H1 (cell line): ENCODE measurements at regions of chr10 and their contacts with region 1.

Region 1: DNA sequence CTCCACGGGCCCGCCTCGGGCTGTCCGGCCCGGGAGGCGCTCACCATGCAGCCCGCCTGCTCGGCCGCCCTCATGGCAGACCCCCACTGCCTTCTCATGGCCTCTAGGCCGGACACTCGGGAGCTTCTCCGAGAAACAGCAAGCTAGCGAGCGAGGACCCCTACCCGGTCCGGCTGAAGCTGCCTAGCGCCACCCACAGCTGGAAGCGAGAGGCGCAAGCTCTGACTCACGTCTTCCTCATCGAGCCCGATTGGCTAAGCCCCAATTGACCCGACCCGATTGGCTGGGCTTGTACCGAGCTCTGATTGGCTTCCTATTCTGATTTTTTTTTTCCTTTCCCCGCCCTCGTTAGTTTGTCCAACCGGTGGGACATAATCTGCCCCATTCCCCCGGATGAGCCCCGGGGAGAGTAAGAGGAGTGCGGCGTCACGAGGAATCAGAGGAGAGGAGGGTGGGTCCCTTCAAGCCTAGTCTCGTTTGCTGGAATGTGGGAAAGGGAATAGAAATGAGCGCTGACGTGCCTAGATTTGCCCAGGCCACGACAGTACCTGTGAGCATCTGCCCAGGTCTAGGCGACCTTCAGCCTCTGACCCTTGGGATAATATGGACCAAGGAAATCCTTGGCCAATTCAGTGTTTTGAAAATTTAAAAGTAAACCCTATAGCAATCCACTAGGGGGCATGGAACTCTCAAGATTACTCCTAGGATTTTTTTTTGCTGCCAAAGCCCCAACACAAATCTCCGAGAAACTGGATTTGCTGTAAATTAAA is at the start of gene TYSND1:
- DNase-seq: peak; percentile 96 to 97
- H3K4me3 ChIP-seq: peak within 1 kb of the TSS; percentile 51 to 70 (median 59)
- H3K27ac ChIP-seq: peak within 1 kb of the TSS; percentile 67
- H3K4me1 ChIP-seq: peaks cover 3 to 9% (median 6%) of the 10 kb centered on the region in 4 experiments; a peak in 3 of 7 replicates
- H3K27me3 ChIP-seq: peaks cover 0 to 8% (median 4%) of the 10 kb centered on the region in 4 experiments; a peak in 3 of 7 replicates
- CTCF ChIP-seq: peak; percentile 77 to 82 (median 81)
- EP300 ChIP-seq: no peak
- POLR2A ChIP-seq: peak; percentile 64 to 87
- RAD21 ChIP-seq: peak; percentile 58 to 70
- total RNA-seq, gene TYSND1: 14.1 and 15.0 TPM in 2 replicates

Region 2: DNA sequence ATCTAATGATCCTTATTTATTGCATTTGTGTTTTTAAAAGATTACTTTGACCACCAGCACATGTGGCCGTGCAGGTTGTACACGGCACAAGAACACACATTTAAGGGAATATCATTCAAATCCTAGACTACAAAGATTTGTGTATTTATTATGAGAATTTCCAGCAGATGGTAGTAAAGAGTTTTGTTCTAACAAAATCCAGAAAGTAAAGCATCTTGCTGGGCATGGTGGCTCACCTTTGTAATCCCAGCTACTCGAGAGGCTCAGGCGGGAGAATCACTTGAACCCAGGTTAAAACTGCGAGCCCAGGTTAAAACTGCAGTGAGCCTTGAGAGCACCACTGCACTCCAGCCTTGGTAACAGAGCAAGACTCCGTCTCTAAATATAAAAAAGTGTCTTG is 62.5 kb before region 1 on chr10:
- CTCF ChIA-PET with region 1: no interaction called
- POLR2A ChIA-PET with region 1: no interaction called
- DNase-seq: no peak
- H3K4me3 ChIP-seq: no peak overlapping the region
- H3K27ac ChIP-seq: no peak overlapping the region
- H3K4me1 ChIP-seq: no peaks in the 10 kb centered on the region; a peak in 2 of 7 replicates
- H3K27me3 ChIP-seq: no peaks in the 10 kb centered on the region
- CTCF ChIP-seq: no peak
- EP300 ChIP-seq: no peak
- POLR2A ChIP-seq: no peak
- RAD21 ChIP-seq: no peak

Region 3: DNA sequence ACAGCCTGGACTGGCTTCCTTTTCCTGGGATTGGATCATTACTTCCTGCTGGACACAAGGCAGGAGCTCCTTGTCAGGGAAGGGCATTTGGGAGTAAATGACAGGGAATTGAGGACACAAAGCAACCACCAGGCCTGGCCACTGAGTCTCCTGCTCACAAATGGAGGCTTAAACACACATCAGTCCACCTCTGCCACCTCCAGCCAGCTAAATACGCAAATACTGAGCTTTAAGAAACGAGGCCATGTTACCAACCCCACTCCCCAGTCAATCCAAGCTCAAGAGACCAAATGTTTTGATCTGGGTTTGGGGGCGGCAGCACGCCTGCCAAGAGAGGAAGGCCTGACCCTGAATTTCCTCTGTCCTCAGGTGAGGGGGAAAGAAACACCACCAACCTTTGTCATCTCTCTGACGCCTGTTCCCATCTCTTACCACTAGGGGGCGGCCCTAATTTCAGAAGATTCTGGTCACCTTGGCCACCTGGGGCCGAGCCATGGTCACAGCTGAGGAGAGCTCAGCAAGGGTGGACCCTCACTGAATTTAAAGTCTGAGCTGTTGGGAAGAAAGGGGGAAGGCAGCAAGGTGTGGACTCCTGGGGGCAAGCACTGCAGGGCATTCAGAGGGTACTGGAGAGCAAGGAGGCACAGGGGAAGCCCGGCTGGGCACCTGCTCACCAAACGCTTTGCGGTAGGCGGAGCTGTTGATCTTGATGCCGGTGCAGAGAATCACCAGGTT is 30.6 kb before region 1 on chr10:
- CTCF ChIA-PET with region 1: interaction called, 123 read pairs
- POLR2A ChIA-PET with region 1: interaction called, 15 read pairs
- DNase-seq: peak in 1 of 2 experiments; percentile 84
- H3K4me3 ChIP-seq: no peak overlapping the region
- H3K27ac ChIP-seq: no peak overlapping the region
- H3K4me1 ChIP-seq: no peaks in the 10 kb centered on the region; a peak in 1 of 7 replicates
- H3K27me3 ChIP-seq: no peaks in the 10 kb centered on the region
- CTCF ChIP-seq: peak; percentile 69 to 90 (median 88)
- EP300 ChIP-seq: no peak
- POLR2A ChIP-seq: no peak
- RAD21 ChIP-seq: peak; percentile 50 to 64

Region 4: DNA sequence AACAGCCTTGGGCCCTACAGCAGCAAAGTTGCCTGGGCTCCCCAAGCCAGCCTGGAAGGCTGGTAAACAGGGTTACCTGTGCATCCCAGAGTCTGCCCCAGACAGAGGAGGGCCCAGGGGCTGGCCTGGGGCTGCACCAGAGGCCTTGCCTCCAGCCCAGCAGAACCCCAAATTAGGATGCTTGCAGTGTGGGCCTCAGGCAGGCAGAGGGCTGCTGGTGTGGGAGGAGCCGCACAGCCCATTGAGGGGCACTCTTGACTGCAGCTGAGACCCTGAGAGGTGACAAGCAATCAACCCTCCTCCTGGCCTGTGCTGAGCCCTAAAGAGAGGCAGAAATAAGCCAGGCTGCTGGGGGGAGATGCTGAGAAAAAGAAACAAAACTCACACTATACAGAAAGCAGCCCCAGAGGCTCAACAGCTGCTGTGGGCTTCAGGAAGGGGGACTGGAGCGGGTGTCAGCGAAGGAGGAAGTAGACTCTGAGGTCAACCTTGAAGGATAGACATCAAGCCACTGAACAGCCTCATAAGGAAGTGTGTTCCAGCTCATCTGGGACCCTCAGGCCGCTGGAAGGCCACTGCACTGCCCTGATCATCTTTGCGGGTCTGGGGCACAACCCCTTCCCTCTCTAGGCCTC is 20.6 kb before region 1 on chr10:
- CTCF ChIA-PET with region 1: interaction called, 17 read pairs
- POLR2A ChIA-PET with region 1: interaction called, 11 read pairs
- DNase-seq: no peak
- H3K4me3 ChIP-seq: no peak overlapping the region
- H3K27ac ChIP-seq: no peak overlapping the region
- H3K4me1 ChIP-seq: no peaks in the 10 kb centered on the region
- H3K27me3 ChIP-seq: peaks cover 0 to under 1% (median under 1%) of the 10 kb centered on the region in 4 experiments; a peak in 2 of 7 replicates
- CTCF ChIP-seq: peak in 1 of 3 experiments; percentile 12; a peak in 1 of 4 replicates
- EP300 ChIP-seq: no peak
- POLR2A ChIP-seq: no peak
- RAD21 ChIP-seq: no peak

Region 5: GRCh38 chr10:70132098-70133029 is 14.3 kb before region 1 on chr10 and contains the start of gene AIFM2:
- CTCF ChIA-PET with region 1: interaction called, 10 read pairs
- POLR2A ChIA-PET with region 1: interaction called, 31 read pairs
- DNase-seq: peak in 1 of 2 experiments; percentile 85
- H3K4me3 ChIP-seq: peak within 1 kb of the TSS; percentile 63 to 71 (median 66)
- H3K27ac ChIP-seq: no peak within 1 kb of the TSS
- H3K4me1 ChIP-seq: peaks cover 0 to 4% (median 1%) of the 10 kb centered on the region in 4 experiments; a peak in 2 of 7 replicates
- H3K27me3 ChIP-seq: peaks cover 0 to 25% (median 19%) of the 10 kb centered on the region in 4 experiments; a peak in 6 of 7 replicates
- CTCF ChIP-seq: peak in 1 of 3 experiments; percentile 9; a peak in 1 of 4 replicates
- EP300 ChIP-seq: peak in 1 of 2 experiments; percentile 62; a peak in 1 of 3 replicates
- POLR2A ChIP-seq: peak in 1 of 2 experiments; percentile 23; a peak in 1 of 3 replicates
- RAD21 ChIP-seq: no peak
- total RNA-seq, gene AIFM2: 3.0 and 4.0 TPM in 2 replicates

Region 6: DNA sequence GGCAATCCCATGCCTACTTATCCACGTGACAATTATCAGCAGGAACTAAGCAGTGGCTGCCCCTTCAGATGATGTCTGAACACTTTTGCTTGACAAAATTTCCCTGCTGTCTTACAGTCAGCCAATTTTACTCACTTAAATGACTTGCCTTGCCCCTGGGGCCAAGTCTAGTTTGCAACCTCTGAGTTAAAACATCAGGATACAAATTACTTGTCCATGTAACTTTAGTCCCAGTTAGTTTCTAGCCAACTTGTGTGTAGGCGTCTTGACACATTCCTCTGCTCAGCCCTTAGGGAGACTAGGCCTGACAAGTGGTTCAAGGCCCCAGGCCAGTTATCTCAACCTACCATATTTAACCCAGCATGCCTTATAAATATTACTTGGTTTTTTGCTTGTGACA is 11.4 kb after region 1 on chr10:
- CTCF ChIA-PET with region 1: interaction called, 25 read pairs
- POLR2A ChIA-PET with region 1: interaction called, 6 read pairs
- DNase-seq: no peak
- H3K4me3 ChIP-seq: no peak overlapping the region
- H3K27ac ChIP-seq: no peak overlapping the region
- H3K4me1 ChIP-seq: peaks cover 0 to 2% (median under 1%) of the 10 kb centered on the region in 4 experiments; a peak in 1 of 7 replicates
- H3K27me3 ChIP-seq: no peaks in the 10 kb centered on the region
- CTCF ChIP-seq: no peak
- EP300 ChIP-seq: no peak
- POLR2A ChIP-seq: no peak
- RAD21 ChIP-seq: no peak

Region 7: DNA sequence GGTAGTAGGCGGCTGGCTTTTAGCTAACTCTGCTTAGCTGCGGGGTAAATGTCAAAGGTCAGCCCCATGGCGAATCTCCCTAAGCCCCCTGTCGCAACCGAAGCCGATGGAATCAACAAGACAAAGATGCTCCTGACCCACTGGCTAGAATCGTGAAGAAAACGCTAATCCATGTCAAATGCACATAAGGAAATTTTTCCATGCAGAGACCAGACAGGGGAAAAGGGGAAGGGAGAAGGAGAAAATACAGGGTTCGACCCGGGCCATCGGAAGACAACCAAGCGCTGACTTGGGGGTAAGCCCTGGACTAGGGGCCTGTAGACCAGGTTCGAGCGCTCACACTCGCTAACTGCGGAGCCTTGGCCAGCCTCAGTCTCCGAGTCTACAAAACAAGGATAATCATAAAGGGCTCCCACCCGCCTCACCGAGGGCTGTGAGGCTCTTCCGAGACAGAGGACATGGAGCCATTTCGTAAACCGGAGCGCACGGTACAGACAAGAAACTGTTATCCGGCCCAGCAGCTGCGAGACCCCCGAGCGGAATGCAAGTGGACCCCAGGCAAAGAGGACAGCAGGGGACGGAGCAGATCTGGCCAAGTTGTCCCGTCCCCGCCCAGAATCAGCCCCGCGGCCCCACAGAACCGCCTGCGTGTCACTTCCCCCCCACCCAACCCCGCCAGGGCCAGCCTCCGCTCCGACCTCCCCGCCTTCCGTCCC is 23.1 kb after region 1 on chr10:
- CTCF ChIA-PET with region 1: interaction called, 32 read pairs
- POLR2A ChIA-PET with region 1: interaction called, 6 read pairs
- DNase-seq: no peak
- H3K4me3 ChIP-seq: peak overlapping the region; percentile 85 to 97 (median 96)
- H3K27ac ChIP-seq: no peak overlapping the region
- H3K4me1 ChIP-seq: 0 out of 7 replicates have a peak, but pooled peaks cover 0 to 3% (median 0%) of the 10 kb centered on the region in 4 experiments
- H3K27me3 ChIP-seq: no peaks in the 10 kb centered on the region
- CTCF ChIP-seq: no peak
- EP300 ChIP-seq: no peak
- POLR2A ChIP-seq: no peak
- RAD21 ChIP-seq: no peak

Region 8: DNA sequence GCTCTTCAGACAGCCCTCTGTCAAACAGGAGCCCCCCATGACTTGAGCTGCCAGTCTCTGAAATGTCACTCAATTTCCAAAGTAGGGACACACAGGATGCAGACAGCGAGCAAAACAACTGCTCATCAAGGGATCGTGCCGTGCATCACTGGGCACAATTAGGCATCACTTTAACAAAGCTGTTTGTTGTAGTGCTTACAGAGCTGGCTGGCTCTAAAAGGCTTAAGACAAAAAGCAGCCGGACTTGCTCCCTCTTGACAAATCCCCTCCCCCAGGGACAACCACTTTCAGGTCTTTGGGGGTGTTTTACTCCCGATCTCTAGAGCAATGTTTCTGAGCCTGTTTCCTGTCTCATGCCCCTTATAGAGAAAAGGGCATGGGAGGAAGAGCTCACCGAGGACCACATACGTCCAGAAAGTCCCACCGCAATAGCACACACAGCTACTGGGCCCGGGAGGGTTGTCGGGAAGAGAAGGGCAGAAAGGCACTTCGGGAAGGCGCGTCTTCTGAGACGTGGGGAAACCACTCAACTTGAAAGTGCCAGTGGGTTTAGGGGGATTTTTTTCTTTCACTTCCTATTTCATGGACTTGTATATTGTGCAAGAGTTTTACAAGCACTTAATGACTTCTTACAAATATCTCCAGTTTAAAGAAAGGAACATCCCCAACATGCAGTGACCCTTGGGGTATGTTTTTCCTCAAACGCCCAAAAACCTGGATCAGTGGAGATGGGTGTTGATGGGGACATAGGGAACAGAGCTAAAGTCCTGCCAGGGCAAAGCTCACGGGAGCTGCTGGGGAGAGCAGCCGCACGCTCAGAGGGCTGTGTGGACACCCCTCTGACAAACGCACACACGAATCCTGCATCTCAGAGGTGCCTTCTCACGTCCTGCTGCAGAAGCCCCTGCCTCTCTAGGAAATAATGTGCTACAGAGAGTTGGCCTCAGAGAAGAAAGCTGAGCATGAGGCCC is 208.7 kb after region 1 on chr10:
- CTCF ChIA-PET with region 1: interaction called, 10 read pairs
- POLR2A ChIA-PET with region 1: no interaction called
- DNase-seq: no peak
- H3K4me3 ChIP-seq: no peak overlapping the region
- H3K27ac ChIP-seq: no peak overlapping the region
- H3K4me1 ChIP-seq: no peaks in the 10 kb centered on the region
- H3K27me3 ChIP-seq: no peaks in the 10 kb centered on the region
- CTCF ChIP-seq: no peak
- EP300 ChIP-seq: no peak
- POLR2A ChIP-seq: no peak
- RAD21 ChIP-seq: no peak

Region 9: DNA sequence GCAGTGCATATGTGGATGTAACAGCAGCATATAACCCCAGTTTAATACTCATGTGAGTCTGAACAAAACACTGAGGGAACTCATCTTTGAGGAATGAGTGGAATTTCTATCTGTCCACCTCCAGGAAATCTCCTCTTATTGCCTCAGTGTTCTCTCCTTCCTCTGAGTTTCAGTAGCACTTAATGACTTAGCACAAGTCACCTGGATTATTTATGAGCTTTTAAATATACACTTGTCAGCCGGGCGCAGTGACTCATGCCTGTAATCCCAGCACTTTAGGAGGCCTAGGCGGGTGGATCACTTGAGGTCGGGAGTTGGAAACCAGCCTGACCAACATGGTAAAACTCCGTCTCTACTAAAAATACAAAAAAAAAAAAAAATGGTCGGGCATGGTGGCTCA is 231.4 kb after region 1 on chr10:
- CTCF ChIA-PET with region 1: no interaction called
- POLR2A ChIA-PET with region 1: no interaction called
- DNase-seq: no peak
- H3K4me3 ChIP-seq: no peak overlapping the region
- H3K27ac ChIP-seq: no peak overlapping the region
- H3K4me1 ChIP-seq: peaks cover 0 to 7% (median under 1%) of the 10 kb centered on the region in 4 experiments; a peak in 3 of 7 replicates
- H3K27me3 ChIP-seq: peaks cover 0 to 18% (median 7%) of the 10 kb centered on the region in 4 experiments; a peak in 4 of 7 replicates
- CTCF ChIP-seq: no peak
- EP300 ChIP-seq: no peak
- POLR2A ChIP-seq: no peak
- RAD21 ChIP-seq: no peak